WTC11 (cell line): ENCODE measurements at regions of chr12 and their contacts with region 1.

Region 1: GRCh38 chr12:8890313-8891085 is 23.8 kb upstream of the PHC1 start:
- DNase-seq: peak; percentile 72
- ATAC-seq: peak; percentile 95
- H3K4me3 Mint-ChIP-seq: peak overlapping the region; percentile 68
- H3K27ac Mint-ChIP-seq: peak overlapping the region; percentile 68
- H3K4me1 Mint-ChIP-seq: peaks cover 20% of the 10 kb centered on the region
- H3K27me3 Mint-ChIP-seq: no peaks in the 10 kb centered on the region
- CTCF ChIP-seq: peak; percentile 87

Region 2: GRCh38 chr12:8662593-8662992 is 227.9 kb before region 1 on chr12 and contains the start of gene MFAP5:
- CTCF ChIA-PET with region 1: interaction called, 30 read pairs
- POLR2A ChIA-PET with region 1: interaction called, 4 read pairs
- DNase-seq: no peak
- ATAC-seq: peak; percentile 29; the same call in 1 of the 2 replicates
- H3K4me3 Mint-ChIP-seq: no peak within 1 kb of the TSS
- H3K27ac Mint-ChIP-seq: no peak within 1 kb of the TSS
- H3K4me1 Mint-ChIP-seq: peaks cover 5% of the 10 kb centered on the region
- H3K27me3 Mint-ChIP-seq: no peaks in the 10 kb centered on the region
- CTCF ChIP-seq: no peak
- total RNA-seq, gene MFAP5: 0.69 to 0.96 TPM in 2 of 3 replicates, not detected in the other

Region 3: DNA sequence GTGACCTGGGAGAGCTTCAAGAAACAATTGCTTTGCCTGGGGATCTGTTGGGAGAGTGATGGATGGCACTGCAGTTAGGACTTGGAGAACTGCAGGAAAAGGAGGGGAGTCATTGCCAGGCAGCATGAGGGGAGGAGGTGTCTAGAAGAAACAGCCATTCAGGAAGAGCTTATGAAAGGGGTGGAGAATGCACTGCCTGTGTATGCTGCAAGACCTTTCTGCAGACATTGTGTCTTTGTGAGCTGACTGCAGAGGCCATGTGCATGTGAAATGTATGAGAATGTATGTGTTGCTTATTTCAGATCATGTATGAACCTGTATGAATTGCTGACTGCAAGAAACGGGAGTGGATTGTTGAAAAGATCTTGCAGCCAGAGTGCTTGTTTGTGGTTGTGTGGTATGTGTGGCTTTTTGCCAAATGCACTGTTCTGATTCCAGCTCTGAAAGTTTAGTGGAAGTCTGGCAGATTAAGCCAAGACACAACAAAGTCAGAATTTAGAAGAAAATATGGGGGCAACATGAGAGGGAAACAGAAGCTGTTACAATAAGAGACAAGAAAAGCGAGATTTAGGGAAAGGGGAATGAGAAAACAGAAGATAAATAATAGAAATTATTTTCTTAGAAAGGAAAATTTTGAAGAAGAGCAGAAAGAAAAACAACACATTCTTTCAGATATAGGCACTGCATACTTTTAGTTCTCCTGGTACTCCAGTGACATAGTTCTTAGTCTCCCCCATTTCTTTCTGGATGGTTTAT is 202.5 kb before region 1 on chr12:
- CTCF ChIA-PET with region 1: interaction called, 12 read pairs
- POLR2A ChIA-PET with region 1: no interaction called
- DNase-seq: no peak
- ATAC-seq: peak; percentile 62
- H3K4me3 Mint-ChIP-seq: no peak overlapping the region
- H3K27ac Mint-ChIP-seq: no peak overlapping the region
- H3K4me1 Mint-ChIP-seq: peaks cover 40% of the 10 kb centered on the region
- H3K27me3 Mint-ChIP-seq: no peaks in the 10 kb centered on the region
- CTCF ChIP-seq: no peak

Region 4: GRCh38 chr12:8870586-8870985 is 19.9 kb before region 1 on chr12:
- CTCF ChIA-PET with region 1: interaction called, 15 read pairs
- POLR2A ChIA-PET with region 1: no interaction called
- DNase-seq: no peak
- ATAC-seq: no peak
- H3K4me3 Mint-ChIP-seq: no peak overlapping the region
- H3K27ac Mint-ChIP-seq: no peak overlapping the region; the same call in 1 of the 2 replicates
- H3K4me1 Mint-ChIP-seq: no peaks in the 10 kb centered on the region; the same call in 1 of the 2 replicates
- H3K27me3 Mint-ChIP-seq: no peaks in the 10 kb centered on the region
- CTCF ChIP-seq: no peak

Region 5: GRCh38 chr12:8905546-8905945 is 15.0 kb after region 1 on chr12:
- CTCF ChIA-PET with region 1: interaction called, 15 read pairs
- POLR2A ChIA-PET with region 1: interaction called, 8 read pairs
- DNase-seq: no peak
- ATAC-seq: peak; percentile 12; the same call in 1 of the 2 replicates
- H3K4me3 Mint-ChIP-seq: no peak overlapping the region; the same call in 1 of the 2 replicates
- H3K27ac Mint-ChIP-seq: peak overlapping the region; percentile 99
- H3K4me1 Mint-ChIP-seq: peaks cover 58% of the 10 kb centered on the region
- H3K27me3 Mint-ChIP-seq: no peaks in the 10 kb centered on the region
- CTCF ChIP-seq: no peak

Region 6: GRCh38 chr12:9049520-9050133 is 159.1 kb after region 1 on chr12:
- CTCF ChIA-PET with region 1: interaction called, 10 read pairs
- POLR2A ChIA-PET with region 1: no interaction called
- DNase-seq: no peak
- ATAC-seq: peak; percentile 65; the same call in 1 of the 2 replicates
- H3K4me3 Mint-ChIP-seq: no peak overlapping the region
- H3K27ac Mint-ChIP-seq: no peak overlapping the region
- H3K4me1 Mint-ChIP-seq: peaks cover 7% of the 10 kb centered on the region; the same call in 1 of the 2 replicates
- H3K27me3 Mint-ChIP-seq: no peaks in the 10 kb centered on the region
- CTCF ChIP-seq: peak; percentile 24